ENCODE measurements at regions of chr15 and their contacts with region 1.

Region 1: GRCh38 chr15:90648137-90649070 is 68.7 kb upstream of the BLM start:
- DNase-seq: peak; percentile 79
- ATAC-seq: peak; percentile 73 to 76

Region 2: DNA sequence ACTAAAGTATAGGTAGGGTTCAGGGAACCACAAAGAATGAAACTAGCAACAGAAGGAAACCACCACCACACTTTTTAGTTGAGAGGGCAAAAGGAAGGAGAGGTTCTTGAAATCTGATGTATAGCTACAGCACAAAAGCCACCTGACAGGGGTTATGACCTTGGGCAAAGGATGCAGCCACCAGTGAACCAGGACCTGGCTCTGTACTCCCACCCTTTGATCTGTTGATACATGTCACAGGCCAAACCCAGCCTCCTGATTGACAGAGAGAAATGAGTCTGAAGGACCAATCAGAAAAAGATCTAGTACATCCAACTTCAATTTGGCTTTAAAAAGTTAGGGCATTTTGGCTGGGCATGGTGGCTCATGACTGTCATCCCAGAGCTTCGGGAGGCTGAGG is 48.8 kb after region 1 on chr15:
- intact Hi-C with region 1: loop called in 1 of 2 experiments (anchors 5 kb)
- DNase-seq: no peak
- ATAC-seq: no peak

Region 3: GRCh38 chr15:90886041-90886614 is 237.7 kb after region 1 on chr15:
- intact Hi-C with region 1: loop called (anchors 1 to 2 kb)
- DNase-seq: peak; percentile 82
- ATAC-seq: peak; percentile 52 to 62